Gastrocnemius medialis (tissue), 4 donors: ENCODE measurements at regions of chr15 and their contacts with region 1.

Region 1: GRCh38 chr15:58331903-58332675 is 99.7 kb upstream of the LIPC start:
- DNase-seq: peak; percentile 98
- ATAC-seq: peak; percentile 87 to 88
- H3K4me3 ChIP-seq: peak overlapping the region in 1 of 4 donors; percentile 3
- H3K27ac ChIP-seq: peak overlapping the region; percentile 90 to 97 (median 92)
- H3K4me1 ChIP-seq: peaks cover 44% of the 10 kb centered on the region in 2 donors
- H3K27me3 ChIP-seq: no peaks in the 10 kb centered on the region
- CTCF ChIP-seq: peak in 1 of 5 experiments; percentile 19
- POLR2A ChIP-seq: peak; percentile 60 to 75

Region 2: GRCh38 chr15:58182460-58183163 is 149.5 kb before region 1 on chr15:
- in situ Hi-C with region 1: no loop called
- intact Hi-C with region 1: no loop called
- DNase-seq: no peak
- ATAC-seq: no peak
- H3K4me3 ChIP-seq: no peak overlapping the region
- H3K27ac ChIP-seq: no peak overlapping the region
- H3K4me1 ChIP-seq: no peaks in the 10 kb centered on the region
- H3K27me3 ChIP-seq: no peaks in the 10 kb centered on the region
- CTCF ChIP-seq: peak in 4 of 5 experiments; percentile 22 to 61 (median 40)
- POLR2A ChIP-seq: no peak

Region 3: DNA sequence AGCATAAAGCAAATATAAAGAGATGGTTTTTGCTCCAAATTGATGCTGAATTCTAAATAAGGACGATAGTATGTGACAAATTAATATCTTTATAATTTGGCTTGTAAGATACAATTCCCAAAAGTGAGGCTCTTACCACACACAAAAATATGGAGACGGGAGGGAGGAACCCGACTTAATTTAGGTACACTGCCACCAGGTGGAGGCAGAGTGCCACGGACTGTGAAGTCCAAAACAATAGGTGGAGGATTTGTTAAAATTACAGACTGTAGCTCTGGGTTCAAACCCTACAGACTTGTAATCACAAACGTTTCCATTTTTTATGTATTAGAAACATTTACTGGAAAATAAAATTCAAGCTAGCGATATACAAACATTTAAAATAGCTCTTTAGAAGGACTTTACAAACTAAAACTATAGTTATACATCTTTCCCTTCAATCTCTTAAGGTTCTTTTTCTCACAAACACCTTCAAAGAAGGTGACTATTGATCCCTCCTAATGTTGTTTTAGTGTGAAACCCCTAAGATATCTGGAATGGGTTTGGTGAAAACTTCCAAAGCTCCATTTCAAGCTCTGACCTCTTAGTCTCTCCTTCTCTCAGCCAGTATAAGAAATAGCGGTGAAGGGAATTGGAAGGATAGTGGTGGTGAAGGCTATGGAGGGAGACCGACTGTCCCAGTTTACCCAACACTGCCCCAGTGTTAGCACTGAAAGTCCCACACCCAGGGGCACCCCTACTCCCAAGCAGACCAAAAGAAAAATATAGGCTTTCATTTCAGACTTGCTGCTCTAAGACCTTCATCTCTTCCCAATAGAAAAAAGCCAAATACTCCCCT is 104.2 kb before region 1 on chr15:
- in situ Hi-C with region 1: loop called in 2 of 4 experiments (anchors 25 kb)
- intact Hi-C with region 1: loop called (anchors 1 kb)
- DNase-seq: peak; percentile 63 to 77
- ATAC-seq: peak; percentile 46 to 59
- H3K4me3 ChIP-seq: no peak overlapping the region
- H3K27ac ChIP-seq: peak overlapping the region; percentile 85 to 92 (median 86)
- H3K4me1 ChIP-seq: peaks cover 27 to 37% of the 10 kb centered on the region in 2 donors
- H3K27me3 ChIP-seq: no peaks in the 10 kb centered on the region
- CTCF ChIP-seq: peak; percentile 78 to 95 (median 87)
- POLR2A ChIP-seq: no peak

Region 4: DNA sequence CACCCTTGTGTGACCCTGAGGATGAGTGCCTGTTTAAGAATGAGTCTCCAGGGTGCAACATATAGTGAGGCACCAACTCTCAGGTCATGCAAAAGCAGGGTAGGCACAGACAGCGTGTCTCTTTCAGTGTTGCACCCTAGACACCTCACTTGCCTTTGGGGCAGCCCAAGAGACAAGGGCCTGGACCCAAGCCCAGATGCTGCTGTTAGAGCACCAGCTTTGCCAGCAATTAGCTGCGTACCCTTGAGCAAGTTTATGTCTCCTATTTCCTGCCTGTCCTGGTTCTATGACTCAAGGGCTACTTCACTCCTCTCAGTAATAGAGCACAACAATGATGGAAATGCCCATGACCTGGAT is 71.2 kb before region 1 on chr15:
- in situ Hi-C with region 1: loop called in 1 of 4 experiments (anchors 10 kb)
- intact Hi-C with region 1: loop called (anchors 1 kb)
- DNase-seq: peak; percentile 74 to 89
- ATAC-seq: peak; percentile 81 to 82
- H3K4me3 ChIP-seq: no peak overlapping the region
- H3K27ac ChIP-seq: peak overlapping the region; percentile 90 to 96 (median 94)
- H3K4me1 ChIP-seq: peaks cover 40 to 48% of the 10 kb centered on the region in 2 donors
- H3K27me3 ChIP-seq: no peaks in the 10 kb centered on the region
- CTCF ChIP-seq: peak in 1 of 5 experiments; percentile 0
- POLR2A ChIP-seq: no peak

Region 5: DNA sequence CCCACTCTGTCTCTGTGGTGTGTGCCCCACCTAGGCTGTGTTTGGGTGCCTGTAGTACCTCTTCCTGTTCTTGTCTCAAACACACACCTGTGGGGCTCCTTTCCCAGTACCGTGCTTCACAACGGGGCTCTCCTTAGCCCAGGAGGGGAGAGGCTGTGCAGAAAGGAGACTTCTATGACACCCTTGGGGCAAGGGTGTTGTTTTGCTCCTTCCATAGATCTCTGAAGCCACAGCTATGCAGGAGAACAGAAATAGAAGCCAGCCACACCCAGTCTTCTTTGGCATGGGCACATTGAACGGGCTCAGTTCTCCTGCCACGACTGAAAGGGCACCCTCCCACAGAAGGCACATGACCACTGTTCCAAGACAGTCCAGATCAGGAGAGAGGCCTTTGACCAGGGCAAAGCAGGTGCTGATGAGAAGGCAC is 174.0 kb after region 1 on chr15:
- in situ Hi-C with region 1: no loop called
- intact Hi-C with region 1: loop called (anchors 2 kb)
- DNase-seq: peak; percentile 88 to 90
- ATAC-seq: peak; percentile 92 to 94
- H3K4me3 ChIP-seq: no peak overlapping the region
- H3K27ac ChIP-seq: peak overlapping the region; percentile 71 to 82 (median 80)
- H3K4me1 ChIP-seq: peaks cover 19 to 27% of the 10 kb centered on the region in 2 donors
- H3K27me3 ChIP-seq: no peaks in the 10 kb centered on the region
- CTCF ChIP-seq: no peak
- POLR2A ChIP-seq: peak in 1 of 2 donors; percentile 5

Region 6: GRCh38 chr15:58749532-58750337 is 417.6 kb after region 1 on chr15 and contains the start of gene ADAM10:
- in situ Hi-C with region 1: no loop called
- intact Hi-C with region 1: loop called (anchors 1 kb)
- DNase-seq: peak; percentile 98 to 99
- ATAC-seq: peak; percentile 94 to 95
- H3K4me3 ChIP-seq: peak within 1 kb of the TSS; percentile 75 to 98 (median 85)
- H3K27ac ChIP-seq: peak within 1 kb of the TSS; percentile 89 to 100 (median 96)
- H3K4me1 ChIP-seq: peaks cover 18 to 35% of the 10 kb centered on the region in 2 donors
- H3K27me3 ChIP-seq: no peaks in the 10 kb centered on the region
- CTCF ChIP-seq: peak in 1 of 5 experiments; percentile 10
- POLR2A ChIP-seq: peak; percentile 89 to 97
- total RNA-seq, gene ADAM10: 20.1 to 42.5 (median 33.4) TPM

Region 7: GRCh38 chr15:58933281-58934113 is 601.4 kb after region 1 on chr15 and contains the start of gene SLTM:
- in situ Hi-C with region 1: no loop called
- intact Hi-C with region 1: loop called (anchors 2 kb)
- DNase-seq: peak; percentile 85 to 94
- ATAC-seq: peak; percentile 87
- H3K4me3 ChIP-seq: peak within 1 kb of the TSS; percentile 73 to 95 (median 76)
- H3K27ac ChIP-seq: peak within 1 kb of the TSS; percentile 93 to 99 (median 96)
- H3K4me1 ChIP-seq: peaks cover 13 to 26% of the 10 kb centered on the region in 2 donors
- H3K27me3 ChIP-seq: no peaks in the 10 kb centered on the region
- CTCF ChIP-seq: peak in 4 of 5 experiments; percentile 13 to 43 (median 37)
- POLR2A ChIP-seq: peak; percentile 94 to 97
- total RNA-seq, gene SLTM: 46.5 to 76.2 (median 60.9) TPM